Sciatic nerve (tissue), 2 donors: ENCODE measurements at regions of chr15 and their contacts with region 1.

Region 1: DNA sequence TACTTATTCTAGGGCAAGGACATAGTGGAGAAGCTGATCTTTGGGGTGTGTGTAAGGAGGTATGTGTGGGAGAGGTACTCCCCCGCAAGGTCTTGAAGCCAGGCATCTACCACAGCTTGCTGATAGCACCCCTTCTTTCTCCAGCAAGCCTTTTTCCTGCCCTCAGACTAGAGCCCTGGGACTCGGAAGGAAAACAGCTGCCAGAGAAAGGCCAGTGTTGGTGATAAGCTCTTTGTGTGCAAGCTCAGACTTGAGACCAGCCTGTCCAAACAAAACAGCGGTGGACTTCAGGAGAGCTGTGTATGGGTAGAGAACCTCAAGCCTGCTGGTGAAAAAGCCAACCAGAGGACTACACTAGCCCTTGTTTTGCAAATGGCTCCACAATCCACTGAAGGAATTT is 1028.6 kb downstream of the MCTP2 start:
- DNase-seq: no peak
- ATAC-seq: peak; percentile 19

Region 2: GRCh38 chr15:96345560-96346399 is 1085.8 kb after region 1 on chr15:
- intact Hi-C with region 1: loop called (anchors 10 kb)
- DNase-seq: peak; percentile 91
- ATAC-seq: peak; percentile 87